MCF 10A (cell line): ENCODE measurements at regions of chr7 and their contacts with region 1.

Region 1: DNA sequence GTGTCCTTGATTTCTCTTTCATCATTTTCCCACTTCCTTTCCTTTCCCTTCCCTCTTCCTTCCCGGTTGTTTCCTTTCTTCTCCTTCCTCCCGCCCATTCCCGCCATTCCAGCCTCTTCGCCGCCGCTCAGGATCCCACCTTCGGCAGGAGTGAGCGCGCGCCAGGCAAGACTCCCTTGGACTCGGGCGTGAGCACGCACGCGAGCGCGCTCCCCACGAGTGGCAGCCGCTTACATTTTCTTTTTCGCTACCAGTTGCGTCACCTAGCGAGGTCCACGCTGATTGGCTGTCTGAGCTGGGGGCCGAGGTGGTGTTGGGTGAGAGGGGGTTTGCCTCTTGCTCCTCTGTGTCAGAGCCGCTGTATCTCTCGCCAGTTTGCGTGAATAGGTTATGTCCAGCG is 11.8 kb downstream of the ZAN start:
- DNase-seq: no peak
- H3K4me3 Mint-ChIP-seq: peak overlapping the region; percentile 58
- H3K27ac Mint-ChIP-seq: no peak overlapping the region
- H3K4me1 Mint-ChIP-seq: no peaks in the 10 kb centered on the region
- H3K27me3 Mint-ChIP-seq: peaks cover 13% of the 10 kb centered on the region
- CTCF ChIP-seq: no peak

Region 2: GRCh38 chr7:99876491-99876890 is 868.7 kb before region 1 on chr7:
- CTCF ChIA-PET with region 1: no interaction called
- POLR2A ChIA-PET with region 1: no interaction called
- intact Hi-C with region 1: no loop called
- DNase-seq: no peak
- H3K4me3 Mint-ChIP-seq: no peak overlapping the region
- H3K27ac Mint-ChIP-seq: no peak overlapping the region
- H3K4me1 Mint-ChIP-seq: no peaks in the 10 kb centered on the region
- H3K27me3 Mint-ChIP-seq: no peaks in the 10 kb centered on the region
- CTCF ChIP-seq: no peak

Region 3: GRCh38 chr7:100726996-100727761 is 18.0 kb before region 1 on chr7:
- CTCF ChIA-PET with region 1: interaction called, 6 read pairs
- POLR2A ChIA-PET with region 1: no interaction called
- intact Hi-C with region 1: loop called (anchors 2 kb)
- DNase-seq: no peak
- H3K4me3 Mint-ChIP-seq: no peak overlapping the region
- H3K27ac Mint-ChIP-seq: no peak overlapping the region
- H3K4me1 Mint-ChIP-seq: peaks cover 12% of the 10 kb centered on the region
- H3K27me3 Mint-ChIP-seq: no peaks in the 10 kb centered on the region
- CTCF ChIP-seq: no peak